Left colon (tissue), 2 donors: ENCODE measurements at regions of chr3 and their contacts with region 1.

Region 1: GRCh38 chr3:85576091-85576690 is 617.4 kb downstream of the CADM2 start:
- DNase-seq: peak; percentile 27 to 48
- ATAC-seq: no peak

Region 2: DNA sequence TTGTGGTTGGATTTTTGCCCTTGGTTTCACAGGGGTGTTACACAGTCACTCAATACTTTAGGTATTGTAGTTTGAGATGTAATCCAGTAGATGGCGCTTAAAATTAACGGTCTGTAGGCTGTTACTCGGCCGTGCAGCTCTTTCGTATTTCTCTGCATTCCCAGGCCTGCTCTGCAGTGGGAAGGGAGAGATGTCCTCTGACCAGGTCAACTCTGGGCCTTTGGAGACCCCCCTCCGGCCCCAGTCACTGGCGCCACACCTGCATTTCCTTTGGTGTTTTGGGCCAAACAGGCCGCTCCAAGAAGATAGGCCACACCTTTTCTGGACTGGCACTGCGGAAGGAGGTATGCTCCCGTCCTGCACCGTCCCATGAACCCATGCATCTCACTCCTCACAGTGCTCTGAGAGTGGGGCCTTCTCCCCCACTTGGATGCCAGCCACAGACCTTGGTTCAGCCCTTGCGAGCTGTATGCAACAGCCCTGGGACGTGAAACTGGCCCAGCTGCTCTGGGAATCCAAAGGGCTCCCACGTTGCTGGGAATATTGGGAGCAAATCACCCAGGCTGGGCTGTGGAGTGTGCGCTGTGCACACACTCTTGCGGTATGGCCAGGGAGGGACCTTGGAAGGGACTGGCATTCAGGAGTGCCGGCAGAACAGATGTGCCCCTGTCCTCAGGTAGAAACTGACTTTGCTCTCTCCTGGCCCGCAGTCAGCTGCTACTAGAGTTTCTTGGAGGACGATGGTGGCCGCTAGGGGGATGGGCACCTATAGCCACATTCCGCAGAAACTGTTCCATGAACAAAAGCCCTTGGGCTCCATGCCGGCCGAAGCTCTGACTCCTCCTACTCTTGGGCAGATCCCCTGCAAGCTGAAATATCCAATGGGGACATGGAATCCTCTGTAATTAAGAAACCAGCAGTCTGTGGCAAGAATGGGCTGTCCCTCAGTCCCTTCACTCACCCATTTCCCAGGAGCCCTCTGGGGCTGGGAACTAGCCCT is 1027.9 kb before region 1 on chr3:
- intact Hi-C with region 1: loop called in 1 of 2 experiments (anchors 5 kb)
- DNase-seq: no peak
- ATAC-seq: peak; percentile 68

Region 3: GRCh38 chr3:85474241-85474640 is 102.0 kb before region 1 on chr3:
- intact Hi-C with region 1: no loop called
- DNase-seq: no peak
- ATAC-seq: no peak

Region 4: GRCh38 chr3:85535517-85535916 is 40.7 kb before region 1 on chr3:
- intact Hi-C with region 1: no loop called
- DNase-seq: no peak
- ATAC-seq: no peak